ENCODE measurements at regions of chr1 and their contacts with region 1.

Region 1: GRCh38 chr1:31789259-31790065 is 25.3 kb upstream of the ADGRB2 start:
- DNase-seq: peak; percentile 97
- H3K4me3 ChIP-seq: peak overlapping the region; percentile 67 to 76
- H3K27ac ChIP-seq: peak overlapping the region; percentile 70 to 94; a peak in 3 of 4 replicates
- H3K4me1 ChIP-seq: peaks cover 4 to 53% of the 10 kb centered on the region in 2 experiments; a peak in 2 of 4 replicates
- H3K27me3 ChIP-seq: no peaks in the 10 kb centered on the region
- CTCF ChIP-seq: peak; percentile 82
- EP300 ChIP-seq: no peak
- RAD21 ChIP-seq: peak; percentile 96

Region 2: DNA sequence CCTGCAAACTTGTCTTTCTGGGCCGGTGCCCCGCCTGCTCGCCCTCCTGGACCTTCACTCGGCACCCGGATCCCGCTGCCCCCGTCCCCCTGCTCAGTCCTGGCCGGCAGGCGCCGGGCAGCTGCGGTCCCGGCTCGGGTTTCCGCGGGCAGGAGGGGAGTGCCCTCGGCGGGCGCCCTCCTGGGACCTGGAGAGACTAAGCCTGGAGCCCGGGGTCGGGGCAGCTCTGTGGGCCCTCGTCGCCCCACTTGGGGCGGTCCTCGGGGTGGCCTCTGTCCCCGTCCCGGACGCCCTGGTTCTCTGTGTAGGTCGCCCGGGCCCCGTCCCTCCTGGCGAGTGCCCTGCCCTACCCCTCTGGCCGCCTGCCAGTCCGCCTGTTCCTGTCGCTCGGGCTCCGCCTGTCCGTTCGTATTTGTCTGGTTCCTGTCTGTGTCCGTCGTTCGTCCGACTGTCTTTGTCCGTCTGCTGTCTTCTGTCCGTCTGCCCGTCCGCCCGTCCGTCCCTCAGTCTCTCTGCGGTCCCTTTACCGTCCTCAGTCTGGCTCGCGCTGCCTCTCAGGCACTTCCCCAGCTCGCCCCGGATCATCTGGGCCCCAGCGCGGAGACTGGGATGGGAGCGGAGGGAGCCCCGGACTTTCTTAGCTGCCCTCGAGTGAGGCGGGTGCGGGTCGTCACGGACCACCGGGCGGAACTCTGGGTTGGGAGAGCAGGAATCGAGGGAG is 375.9 kb before region 1 on chr1:
- CTCF ChIA-PET with region 1: no interaction called
- POLR2A ChIA-PET with region 1: no interaction called
- DNase-seq: peak; percentile 85
- H3K4me3 ChIP-seq: peak overlapping the region; percentile 84 to 85
- H3K27ac ChIP-seq: peak overlapping the region in 1 of 2 experiments; percentile 65; a peak in 1 of 4 replicates
- H3K4me1 ChIP-seq: peaks cover 0 to 17% of the 10 kb centered on the region in 2 experiments; a peak in 1 of 4 replicates
- H3K27me3 ChIP-seq: no peaks in the 10 kb centered on the region
- CTCF ChIP-seq: no peak
- EP300 ChIP-seq: 0 out of 4 replicates have a peak, but pooled peaks of 1 of the 2 experiments have one; percentile 4
- RAD21 ChIP-seq: no peak

Region 3: GRCh38 chr1:31639543-31639942 is 149.9 kb before region 1 on chr1:
- CTCF ChIA-PET with region 1: interaction called, 11 read pairs
- POLR2A ChIA-PET with region 1: no interaction called
- DNase-seq: no peak
- H3K4me3 ChIP-seq: no peak overlapping the region
- H3K27ac ChIP-seq: peak overlapping the region; percentile 13 to 81; a peak in 3 of 4 replicates
- H3K4me1 ChIP-seq: peaks cover 14 to 35% of the 10 kb centered on the region in 2 experiments; a peak in 3 of 4 replicates
- H3K27me3 ChIP-seq: no peaks in the 10 kb centered on the region
- CTCF ChIP-seq: no peak
- EP300 ChIP-seq: no peak
- RAD21 ChIP-seq: no peak

Region 4: DNA sequence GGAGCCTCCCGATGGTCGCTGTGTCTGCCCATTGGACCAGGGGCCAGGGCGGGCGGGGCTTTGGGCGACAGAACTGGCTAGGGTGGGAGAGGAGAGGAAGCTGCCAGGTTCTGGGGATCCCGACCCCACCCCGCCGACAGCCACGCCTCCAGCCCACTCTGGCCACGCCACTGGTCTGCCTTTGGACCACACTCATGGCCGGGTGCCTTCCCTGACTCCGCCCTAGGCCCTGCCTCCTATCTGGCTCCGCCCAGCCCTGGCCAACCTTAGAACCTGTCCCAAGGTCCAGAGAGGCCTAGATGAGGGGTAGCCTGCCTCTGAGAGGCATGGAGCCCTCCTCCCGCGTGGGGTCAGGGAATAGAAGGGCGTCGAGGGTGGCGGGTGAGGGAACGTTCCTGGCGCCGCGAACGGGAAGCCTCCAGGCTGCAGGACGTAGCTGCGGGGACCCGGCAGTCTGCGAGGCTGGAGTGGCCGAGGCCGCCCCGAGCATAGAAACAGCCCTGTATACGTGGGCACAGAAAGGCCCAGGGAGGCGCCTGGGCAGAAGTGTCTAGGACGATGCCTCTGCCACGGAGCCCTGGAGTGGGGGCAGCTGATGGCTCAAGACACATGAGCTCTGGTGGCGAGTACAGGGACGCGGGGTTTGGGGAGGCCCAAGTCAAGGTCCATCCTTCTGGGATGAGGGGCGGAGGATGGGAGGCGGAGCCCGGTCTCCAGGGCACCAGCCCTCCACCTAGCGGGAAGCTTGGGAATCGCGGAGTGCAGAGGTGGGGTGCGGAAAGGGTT is 74.2 kb before region 1 on chr1:
- CTCF ChIA-PET with region 1: interaction called, 73 read pairs
- POLR2A ChIA-PET with region 1: interaction called, 7 read pairs
- DNase-seq: peak; percentile 95
- H3K4me3 ChIP-seq: peak overlapping the region; percentile 44 to 50
- H3K27ac ChIP-seq: peak overlapping the region; percentile 94 to 95
- H3K4me1 ChIP-seq: peaks cover 41 to 54% of the 10 kb centered on the region in 2 experiments; a peak in 3 of 4 replicates
- H3K27me3 ChIP-seq: no peaks in the 10 kb centered on the region
- CTCF ChIP-seq: peak; percentile 79
- EP300 ChIP-seq: no peak
- RAD21 ChIP-seq: peak; percentile 66

Region 5: DNA sequence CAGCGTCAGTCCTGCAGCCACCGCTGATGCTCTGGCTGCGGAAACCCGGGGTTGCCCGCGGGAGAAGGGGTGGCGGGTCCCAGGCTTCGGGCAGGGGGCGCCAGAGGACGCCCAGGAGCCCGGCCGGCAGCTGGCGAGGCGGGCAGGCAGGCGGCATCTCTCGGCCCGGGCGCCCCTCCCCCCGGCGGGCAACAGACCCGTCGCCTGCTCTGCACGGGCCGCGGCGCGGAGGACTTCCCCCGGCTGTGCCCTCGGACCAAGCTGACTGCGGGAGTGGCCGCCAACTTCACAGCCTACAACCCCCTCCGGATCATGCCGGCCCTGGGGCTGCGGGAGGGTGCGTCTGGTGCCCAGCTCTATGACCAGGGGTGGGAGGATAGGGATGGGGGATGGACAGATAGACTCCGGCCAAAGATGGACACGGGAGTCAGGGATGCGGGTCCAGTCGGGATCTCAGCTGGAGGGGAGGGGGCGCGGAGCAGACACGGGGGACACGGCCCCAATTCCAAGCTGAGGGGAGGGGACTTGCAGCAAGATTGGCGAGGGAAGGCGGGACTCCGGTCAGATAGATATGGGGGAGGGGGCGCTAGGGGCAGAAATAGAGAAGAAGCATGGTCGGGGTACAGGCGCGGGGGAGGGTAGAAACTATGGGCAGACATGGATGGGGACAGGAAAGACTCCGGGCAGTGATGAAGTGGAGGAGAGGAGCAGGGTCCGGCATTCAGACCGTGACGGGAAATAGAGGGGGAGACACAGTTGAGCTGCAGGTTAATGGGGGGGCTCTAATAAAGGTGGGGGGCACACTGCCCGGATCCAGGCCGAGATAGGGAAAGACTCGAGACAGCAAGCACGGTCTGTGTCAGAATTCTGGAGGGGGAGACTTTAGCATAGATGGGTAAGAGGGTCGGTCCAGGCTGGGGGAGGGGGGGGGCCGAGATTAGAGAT is 26.5 kb before region 1 on chr1:
- CTCF ChIA-PET with region 1: interaction called, 707 read pairs
- POLR2A ChIA-PET with region 1: interaction called, 58 read pairs
- DNase-seq: peak; percentile 97
- H3K4me3 ChIP-seq: peak overlapping the region; percentile 74 to 75
- H3K27ac ChIP-seq: peak overlapping the region in 1 of 2 experiments; percentile 85; a peak in 2 of 4 replicates
- H3K4me1 ChIP-seq: peaks cover 27 to 66% of the 10 kb centered on the region in 2 experiments
- H3K27me3 ChIP-seq: no peaks in the 10 kb centered on the region
- CTCF ChIP-seq: peak; percentile 62
- EP300 ChIP-seq: peak in 1 of 2 experiments; percentile 34; a peak in 1 of 4 replicates
- RAD21 ChIP-seq: peak; percentile 75

Region 6: DNA sequence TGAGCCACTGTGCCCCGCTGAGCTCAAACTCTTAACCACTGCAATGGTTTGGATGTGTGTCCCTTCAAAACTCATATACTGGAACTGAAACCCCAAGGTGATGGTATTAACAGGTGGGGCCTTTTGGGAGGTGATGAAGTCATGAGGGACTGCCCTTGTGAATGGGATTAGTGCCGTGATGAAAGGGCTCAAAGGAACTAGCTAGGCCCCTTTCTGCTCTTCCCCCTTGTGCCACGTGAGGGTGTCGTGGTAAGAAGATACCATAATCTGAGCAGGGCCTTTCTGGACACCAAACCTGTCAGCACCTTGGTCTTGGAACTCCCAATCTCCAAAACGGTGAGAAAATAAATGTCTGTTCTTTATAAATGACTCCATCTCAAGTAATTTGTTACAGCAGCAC is 71.9 kb after region 1 on chr1:
- CTCF ChIA-PET with region 1: no interaction called
- POLR2A ChIA-PET with region 1: no interaction called
- DNase-seq: no peak
- H3K4me3 ChIP-seq: no peak overlapping the region
- H3K27ac ChIP-seq: no peak overlapping the region
- H3K4me1 ChIP-seq: no peaks in the 10 kb centered on the region
- H3K27me3 ChIP-seq: no peaks in the 10 kb centered on the region
- CTCF ChIP-seq: no peak
- EP300 ChIP-seq: no peak
- RAD21 ChIP-seq: no peak

Region 7: DNA sequence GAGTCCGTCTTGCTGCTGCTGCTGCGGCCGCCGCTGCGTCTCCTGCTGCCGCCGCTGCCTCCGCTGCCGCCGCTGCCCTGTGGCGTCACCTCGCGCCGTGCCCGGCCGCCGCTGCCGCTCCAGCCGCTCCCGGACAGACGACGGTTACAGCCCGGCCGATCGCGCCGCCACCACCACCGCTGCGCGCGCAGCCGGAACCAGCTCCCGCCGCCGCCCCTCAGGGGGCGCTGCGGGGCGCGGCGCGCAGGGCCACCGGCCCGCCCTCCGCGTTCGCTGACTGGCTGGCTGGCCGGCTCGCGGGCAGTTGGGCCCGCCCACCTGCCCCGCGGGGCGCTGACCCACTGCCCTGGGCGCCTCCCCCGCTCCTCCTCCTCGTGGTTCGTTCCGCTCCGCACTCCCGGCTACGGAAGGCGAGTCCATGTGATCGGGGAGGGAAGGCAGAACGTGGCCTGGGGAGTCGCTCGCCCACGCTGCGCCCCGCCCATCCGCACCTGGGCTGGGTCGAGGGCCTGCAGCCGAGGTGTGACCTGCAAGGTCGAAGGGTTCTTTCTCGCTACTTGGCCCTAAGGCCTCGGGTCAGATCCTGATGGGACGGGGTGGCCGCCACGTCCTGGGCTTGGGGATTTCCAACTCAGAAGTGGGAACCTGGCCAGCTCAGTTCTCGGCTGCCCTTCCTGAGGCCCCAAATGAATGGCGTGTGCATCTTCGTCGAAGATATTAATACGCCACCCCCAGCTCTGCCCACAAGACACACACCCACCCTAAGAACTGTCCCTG is 148.9 kb after region 1 on chr1 and contains the start of gene PTP4A2:
- CTCF ChIA-PET with region 1: interaction called, 12 read pairs
- POLR2A ChIA-PET with region 1: interaction called, 4 read pairs
- DNase-seq: peak; percentile 100
- H3K4me3 ChIP-seq: peak within 1 kb of the TSS; percentile 58 to 78
- H3K27ac ChIP-seq: peak within 1 kb of the TSS; percentile 76 to 86
- H3K4me1 ChIP-seq: peaks cover 10 to 43% of the 10 kb centered on the region in 2 experiments
- H3K27me3 ChIP-seq: no peaks in the 10 kb centered on the region
- CTCF ChIP-seq: no peak; the same call in 1 of the 2 replicates
- EP300 ChIP-seq: no peak
- RAD21 ChIP-seq: no peak
- polyA plus RNA-seq, gene PTP4A2: 41.7 and 46.7 TPM in 2 replicates